PC-3 (cell line): ENCODE measurements at regions of chr1 and their contacts with region 1.

Region 1: GRCh38 chr1:81549604-81550127 is 251.1 kb upstream of the ADGRL2 start:
- DNase-seq: peak; percentile 74
- ATAC-seq: peak; percentile 88
- H3K4me3 ChIP-seq: no peak overlapping the region
- H3K27ac ChIP-seq: no peak overlapping the region
- H3K4me1 ChIP-seq: peaks cover 12% of the 10 kb centered on the region
- H3K27me3 ChIP-seq: peaks cover 33% of the 10 kb centered on the region
- CTCF ChIP-seq: peak; percentile 84

Region 2: GRCh38 chr1:81664341-81664740 is 114.7 kb after region 1 on chr1:
- CTCF ChIA-PET with region 1: no interaction called
- POLR2A ChIA-PET with region 1: no interaction called
- intact Hi-C with region 1: loop called (anchors 5 kb)
- DNase-seq: no peak
- ATAC-seq: no peak
- H3K4me3 ChIP-seq: no peak overlapping the region
- H3K27ac ChIP-seq: no peak overlapping the region
- H3K4me1 ChIP-seq: peaks cover 18% of the 10 kb centered on the region
- H3K27me3 ChIP-seq: no peaks in the 10 kb centered on the region
- CTCF ChIP-seq: no peak